K562 (cell line): ENCODE measurements at regions of chr9 and their contacts with region 1.

Region 1: DNA sequence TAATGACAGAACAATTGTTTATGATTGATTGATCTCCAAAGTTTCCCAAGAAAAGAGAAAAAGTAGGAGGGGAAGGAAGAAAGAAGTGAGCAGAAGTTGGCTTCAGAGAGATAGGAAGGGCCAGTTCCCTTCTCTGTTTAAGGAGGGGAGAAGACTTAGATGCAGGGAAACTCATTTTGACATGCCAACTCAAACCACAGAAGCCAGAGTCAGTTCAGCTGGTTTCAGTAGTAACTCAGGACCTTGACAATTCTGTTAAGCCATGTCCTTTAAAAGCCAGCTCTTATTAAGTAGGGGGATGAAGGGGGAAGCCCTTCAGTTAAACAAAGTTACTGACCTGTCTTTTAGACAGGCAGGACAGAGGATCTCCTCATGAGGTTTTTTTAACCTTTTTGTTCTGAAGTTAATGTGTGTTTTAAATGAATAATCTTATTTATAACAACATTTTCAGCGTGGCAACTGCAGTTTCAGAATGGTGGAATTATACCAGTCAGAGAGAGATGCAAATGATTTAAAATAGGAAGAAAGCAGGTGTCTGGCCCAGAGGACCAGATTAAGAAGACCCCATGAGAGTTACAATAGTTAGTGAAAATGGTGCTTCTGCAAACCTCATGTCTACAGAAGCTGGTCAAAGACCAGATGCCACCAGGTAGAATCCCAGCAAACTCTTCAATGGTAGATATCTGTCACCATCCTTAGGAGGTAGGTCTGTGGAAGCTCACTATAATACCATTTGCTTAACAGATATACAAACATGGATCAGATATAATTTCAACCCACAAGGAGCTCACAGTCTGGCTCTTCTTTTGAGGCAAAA is 29.3 kb upstream of the ABL1 start:
- DNase-seq: peak in 1 of 4 experiments; percentile 49
- ATAC-seq: peak; percentile 10; the same call in 2 of the 3 replicates
- H3K4me3 ChIP-seq: no peak overlapping the region
- H3K27ac ChIP-seq: no peak overlapping the region
- H3K4me1 ChIP-seq: no peaks in the 10 kb centered on the region
- H3K27me3 ChIP-seq: no peaks in the 10 kb centered on the region
- CTCF ChIP-seq: no peak
- EP300 ChIP-seq: no peak
- POLR2A ChIP-seq: no peak
- RAD21 ChIP-seq: no peak

Region 2: GRCh38 chr9:130785940-130786508 is 19.7 kb before region 1 on chr9:
- CTCF ChIA-PET with region 1: interaction called, 3 read pairs
- POLR2A ChIA-PET with region 1: interaction called, 75 read pairs
- in situ Hi-C with region 1: no loop called
- intact Hi-C with region 1: no loop called
- DNase-seq: peak in 2 of 4 experiments; percentile 71 to 80
- ATAC-seq: peak; percentile 63
- H3K4me3 ChIP-seq: no peak overlapping the region
- H3K27ac ChIP-seq: no peak overlapping the region
- H3K4me1 ChIP-seq: peaks cover 0 to 6% of the 10 kb centered on the region in 2 experiments; a peak in 2 of 5 replicates
- H3K27me3 ChIP-seq: no peaks in the 10 kb centered on the region
- CTCF ChIP-seq: no peak
- EP300 ChIP-seq: no peak
- POLR2A ChIP-seq: no peak
- RAD21 ChIP-seq: no peak

Region 3: GRCh38 chr9:130794923-130795495 is 10.7 kb before region 1 on chr9:
- CTCF ChIA-PET with region 1: interaction called, 3 read pairs
- POLR2A ChIA-PET with region 1: interaction called, 75 read pairs
- in situ Hi-C with region 1: no loop called
- intact Hi-C with region 1: no loop called
- DNase-seq: no peak
- ATAC-seq: no peak
- H3K4me3 ChIP-seq: no peak overlapping the region
- H3K27ac ChIP-seq: no peak overlapping the region
- H3K4me1 ChIP-seq: no peaks in the 10 kb centered on the region
- H3K27me3 ChIP-seq: no peaks in the 10 kb centered on the region
- CTCF ChIP-seq: no peak
- EP300 ChIP-seq: no peak
- POLR2A ChIP-seq: no peak
- RAD21 ChIP-seq: no peak